PC-9 (cell line): ENCODE measurements at regions of chr7 and their contacts with region 1.

Region 1: DNA sequence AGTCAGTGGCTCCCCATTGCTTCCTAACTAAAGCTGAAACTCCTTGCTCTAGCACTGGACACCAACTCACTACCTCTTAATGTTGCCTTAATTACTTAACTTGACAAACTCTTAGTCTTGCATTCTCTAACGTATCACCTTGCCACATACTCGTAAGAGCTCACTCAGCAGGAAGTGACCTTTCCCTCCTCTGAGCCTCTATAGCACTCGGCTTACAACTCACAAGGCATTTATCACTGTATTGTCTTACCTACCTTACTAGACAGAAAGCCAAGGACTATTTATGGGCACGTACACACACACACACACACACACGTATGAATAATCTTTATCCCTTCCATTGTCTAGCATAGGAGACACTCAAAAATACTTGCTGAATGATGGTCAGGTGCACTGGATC is 21.2 kb downstream of the CEP41 start:
- DNase-seq: no peak
- H3K4me3 ChIP-seq: no peak overlapping the region
- H3K27ac ChIP-seq: no peak overlapping the region
- H3K4me1 ChIP-seq: no peaks in the 10 kb centered on the region; the same call in 1 of the 2 replicates
- H3K27me3 ChIP-seq: no peaks in the 10 kb centered on the region
- CTCF ChIP-seq: no peak

Region 2: GRCh38 chr7:130242198-130243014 is 177.3 kb before region 1 on chr7:
- CTCF ChIA-PET with region 1: no interaction called
- POLR2A ChIA-PET with region 1: no interaction called
- intact Hi-C with region 1: loop called (anchors 10 kb)
- DNase-seq: peak; percentile 38 to 48
- H3K4me3 ChIP-seq: no peak overlapping the region
- H3K27ac ChIP-seq: no peak overlapping the region
- H3K4me1 ChIP-seq: no peaks in the 10 kb centered on the region
- H3K27me3 ChIP-seq: no peaks in the 10 kb centered on the region
- CTCF ChIP-seq: peak; percentile 95

Region 3: DNA sequence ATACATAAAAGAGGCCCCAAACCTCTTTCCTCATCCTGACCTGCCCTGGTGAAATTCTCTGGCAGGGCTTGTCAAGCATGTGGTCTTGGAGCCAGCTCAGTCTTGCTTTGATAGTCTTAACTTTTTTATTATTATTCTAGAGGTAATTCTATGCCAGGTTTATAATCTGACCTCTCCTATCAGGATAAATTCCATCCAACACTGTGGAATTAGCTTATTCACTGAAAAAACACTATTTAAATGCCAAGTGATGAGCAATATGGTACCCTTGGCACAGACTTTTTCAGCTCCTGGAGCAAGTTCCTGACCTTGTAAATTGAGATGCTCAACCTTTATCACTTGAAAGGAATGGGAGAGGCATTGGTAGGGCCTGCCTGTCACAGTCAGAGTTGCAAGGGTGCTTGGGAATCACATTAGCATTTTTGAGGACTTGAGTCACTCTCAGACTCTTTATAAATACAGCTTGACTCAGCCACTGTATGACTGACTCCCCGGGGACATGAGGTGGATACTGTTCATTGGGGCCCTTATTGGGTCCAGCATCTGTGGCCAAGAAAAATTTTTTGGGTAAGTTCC is 126.9 kb before region 1 on chr7 and contains the start of gene CPA4:
- CTCF ChIA-PET with region 1: no interaction called
- POLR2A ChIA-PET with region 1: interaction called, 5 read pairs
- intact Hi-C with region 1: loop called (anchors 5 kb)
- DNase-seq: peak; percentile 64 to 98
- H3K4me3 ChIP-seq: peak within 1 kb of the TSS; percentile 25; the same call in 1 of the 2 replicates
- H3K27ac ChIP-seq: peak within 1 kb of the TSS; percentile 42
- H3K4me1 ChIP-seq: peaks cover 52% of the 10 kb centered on the region
- H3K27me3 ChIP-seq: no peaks in the 10 kb centered on the region
- CTCF ChIP-seq: no peak
- total RNA-seq, gene CPA4: 4.2 and 9.8 TPM in 2 replicates

Region 4: DNA sequence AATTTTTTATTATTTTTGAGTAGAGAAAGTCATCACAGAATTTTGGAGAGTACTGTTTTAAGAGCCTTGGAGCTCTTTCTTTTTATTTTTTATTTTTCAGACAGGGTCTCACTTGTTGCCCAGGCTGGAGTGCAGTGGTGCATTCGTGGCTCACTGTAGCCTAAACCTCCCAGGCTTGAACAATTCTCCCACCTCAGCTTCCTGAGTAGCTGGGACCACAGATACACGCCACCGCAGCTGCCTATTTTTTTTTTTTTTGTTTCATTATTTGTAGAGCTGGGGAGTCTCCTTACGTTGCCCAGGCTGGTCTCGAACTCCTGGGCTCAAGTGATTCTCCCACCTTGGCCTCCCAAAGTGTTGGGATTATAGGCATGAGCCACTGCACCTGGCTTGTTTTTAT is 116.1 kb before region 1 on chr7:
- CTCF ChIA-PET with region 1: no interaction called
- POLR2A ChIA-PET with region 1: interaction called, 23 read pairs
- intact Hi-C with region 1: no loop called
- DNase-seq: no peak
- H3K4me3 ChIP-seq: no peak overlapping the region
- H3K27ac ChIP-seq: no peak overlapping the region
- H3K4me1 ChIP-seq: peaks cover 14% of the 10 kb centered on the region
- H3K27me3 ChIP-seq: no peaks in the 10 kb centered on the region
- CTCF ChIP-seq: no peak

Region 5: GRCh38 chr7:130365511-130366441 is 53.9 kb before region 1 on chr7:
- CTCF ChIA-PET with region 1: no interaction called
- POLR2A ChIA-PET with region 1: no interaction called
- intact Hi-C with region 1: no loop called
- DNase-seq: peak in 1 of 2 experiments; percentile 40
- H3K4me3 ChIP-seq: no peak overlapping the region
- H3K27ac ChIP-seq: no peak overlapping the region
- H3K4me1 ChIP-seq: peaks cover 48% of the 10 kb centered on the region
- H3K27me3 ChIP-seq: no peaks in the 10 kb centered on the region
- CTCF ChIP-seq: no peak

Region 6: GRCh38 chr7:130440527-130441365 is 21.1 kb after region 1 on chr7 and contains the start of gene CEP41:
- CTCF ChIA-PET with region 1: no interaction called
- POLR2A ChIA-PET with region 1: interaction called, 34 read pairs
- intact Hi-C with region 1: no loop called
- DNase-seq: peak; percentile 93 to 99
- H3K4me3 ChIP-seq: peak within 1 kb of the TSS; percentile 73
- H3K27ac ChIP-seq: peak within 1 kb of the TSS; percentile 65
- H3K4me1 ChIP-seq: peaks cover 15% of the 10 kb centered on the region
- H3K27me3 ChIP-seq: no peaks in the 10 kb centered on the region
- CTCF ChIP-seq: no peak
- total RNA-seq, gene CEP41: 16.3 and 18.0 TPM in 2 replicates